Ascending aorta (tissue), 2 donors: ENCODE measurements at regions of chr2 and their contacts with region 1.

Region 1: GRCh38 chr2:66574701-66575624 is 140.0 kb downstream of the MEIS1 start:
- DNase-seq: peak in 1 of 2 donors; percentile 83
- H3K4me3 ChIP-seq: peak overlapping the region; percentile 82 to 86
- H3K27ac ChIP-seq: peak overlapping the region; percentile 72 to 77
- H3K4me1 ChIP-seq: peaks cover 15 to 23% of the 10 kb centered on the region in 2 donors
- H3K27me3 ChIP-seq: peaks cover 21% of the 10 kb centered on the region
- CTCF ChIP-seq: peak; percentile 49 to 70 (median 60)

Region 2: DNA sequence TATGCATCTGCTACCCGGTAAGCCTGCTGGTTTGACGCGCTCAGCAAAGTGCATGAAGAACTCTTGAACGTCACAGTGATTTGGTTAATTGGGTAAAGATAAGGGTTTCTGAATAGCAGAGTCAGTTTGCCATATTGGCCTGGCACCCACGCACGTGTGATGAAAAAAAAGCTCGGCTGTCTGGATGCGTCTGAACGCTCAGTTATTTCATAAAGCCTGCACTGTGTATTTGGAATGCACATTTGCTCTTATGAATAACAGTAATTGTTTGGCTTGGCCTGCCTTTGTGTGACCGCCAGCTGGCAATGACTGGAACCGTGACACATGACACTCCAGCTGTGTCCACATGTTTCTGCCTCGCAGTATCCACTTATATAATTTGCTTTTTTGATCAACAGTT is 269.2 kb before region 1 on chr2:
- intact Hi-C with region 1: loop called (anchors 10 kb)
- DNase-seq: peak in 1 of 2 donors; percentile 71
- H3K4me3 ChIP-seq: no peak overlapping the region
- H3K27ac ChIP-seq: no peak overlapping the region
- H3K4me1 ChIP-seq: peaks cover 0 to 5% of the 10 kb centered on the region in 2 donors
- H3K27me3 ChIP-seq: no peaks in the 10 kb centered on the region
- CTCF ChIP-seq: no peak

Region 3: GRCh38 chr2:66561645-66562303 is 13.2 kb before region 1 on chr2:
- intact Hi-C with region 1: loop called (anchors 2 kb)
- DNase-seq: no peak
- H3K4me3 ChIP-seq: no peak overlapping the region
- H3K27ac ChIP-seq: no peak overlapping the region
- H3K4me1 ChIP-seq: peaks cover 9 to 23% of the 10 kb centered on the region in 2 donors
- H3K27me3 ChIP-seq: no peaks in the 10 kb centered on the region
- CTCF ChIP-seq: no peak

Region 4: GRCh38 chr2:67322353-67323001 is 747.5 kb after region 1 on chr2:
- intact Hi-C with region 1: loop called (anchors 5 kb)
- DNase-seq: peak in 1 of 2 donors; percentile 77
- H3K4me3 ChIP-seq: peak overlapping the region in 1 of 2 donors; percentile 11
- H3K27ac ChIP-seq: peak overlapping the region; percentile 25 to 44
- H3K4me1 ChIP-seq: peaks cover 0 to 10% of the 10 kb centered on the region in 2 donors
- H3K27me3 ChIP-seq: no peaks in the 10 kb centered on the region
- CTCF ChIP-seq: peak; percentile 40 to 70 (median 61)

Region 5: GRCh38 chr2:67840460-67841068 is 1265.6 kb after region 1 on chr2:
- intact Hi-C with region 1: loop called (anchors 5 kb)
- DNase-seq: peak in 1 of 2 donors; percentile 72
- H3K4me3 ChIP-seq: no peak overlapping the region
- H3K27ac ChIP-seq: no peak overlapping the region
- H3K4me1 ChIP-seq: no peaks in the 10 kb centered on the region
- H3K27me3 ChIP-seq: no peaks in the 10 kb centered on the region
- CTCF ChIP-seq: peak; percentile 67 to 88 (median 77)